ENCODE measurements at regions of chr6 and their contacts with region 1.

Region 1: DNA sequence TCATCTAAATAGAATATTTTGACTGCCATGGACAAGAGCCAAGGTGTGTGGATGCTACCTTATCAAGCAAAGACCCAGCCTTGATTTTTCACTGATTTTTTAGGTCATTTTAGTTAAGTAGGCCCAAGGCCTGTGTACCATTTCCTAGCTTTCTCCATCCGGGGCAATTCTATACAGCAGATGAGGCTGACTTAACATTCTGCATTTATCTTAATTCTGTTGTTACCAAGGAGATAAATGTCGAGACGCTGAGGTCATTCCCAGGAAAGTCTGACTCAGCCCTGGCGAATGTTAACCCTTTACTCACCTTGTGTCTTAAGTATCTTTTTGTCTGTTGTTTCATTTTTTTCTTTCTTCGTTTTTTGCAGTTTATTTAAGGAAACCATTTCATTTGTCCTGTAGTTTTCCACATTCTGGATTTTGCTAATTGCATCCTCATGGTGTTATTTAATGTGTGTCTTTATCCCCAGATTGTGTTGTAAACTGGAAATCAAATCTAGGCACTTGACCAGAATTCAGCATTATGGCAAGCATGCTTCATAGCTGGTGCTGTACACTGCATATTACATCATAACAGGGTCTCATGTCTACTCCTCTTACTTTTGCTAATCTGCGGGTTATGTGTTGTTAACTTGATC is 277.0 kb downstream of the CDKAL1 start:
- DNase-seq: peak; percentile 92
- H3K4me3 ChIP-seq: no peak overlapping the region
- CTCF ChIP-seq: no peak

Region 2: GRCh38 chr6:20708367-20709124 is 102.7 kb before region 1 on chr6:
- in situ Hi-C with region 1: loop called (anchors 5 kb)
- DNase-seq: peak; percentile 74
- H3K4me3 ChIP-seq: no peak overlapping the region
- CTCF ChIP-seq: no peak